Colonic mucosa (tissue), 4 donors: ENCODE measurements at regions of chr17 and their contacts with region 1.

Region 1: GRCh38 chr17:63827002-63827771 is at the starts of genes FTSJ3 and PSMC5:
- DNase-seq: peak; percentile 97
- H3K4me3 ChIP-seq: peak within 1 kb of the TSS; percentile 90
- H3K27ac ChIP-seq: peak within 1 kb of the TSS; percentile 91
- H3K4me1 ChIP-seq: peaks cover 17% of the 10 kb centered on the region
- H3K27me3 ChIP-seq: no peaks in the 10 kb centered on the region
- CTCF ChIP-seq: peak; percentile 16
- total RNA-seq, gene FTSJ3: 25.4 to 44.6 TPM
- total RNA-seq, gene PSMC5: 86.1 to 138 TPM

Region 2: DNA sequence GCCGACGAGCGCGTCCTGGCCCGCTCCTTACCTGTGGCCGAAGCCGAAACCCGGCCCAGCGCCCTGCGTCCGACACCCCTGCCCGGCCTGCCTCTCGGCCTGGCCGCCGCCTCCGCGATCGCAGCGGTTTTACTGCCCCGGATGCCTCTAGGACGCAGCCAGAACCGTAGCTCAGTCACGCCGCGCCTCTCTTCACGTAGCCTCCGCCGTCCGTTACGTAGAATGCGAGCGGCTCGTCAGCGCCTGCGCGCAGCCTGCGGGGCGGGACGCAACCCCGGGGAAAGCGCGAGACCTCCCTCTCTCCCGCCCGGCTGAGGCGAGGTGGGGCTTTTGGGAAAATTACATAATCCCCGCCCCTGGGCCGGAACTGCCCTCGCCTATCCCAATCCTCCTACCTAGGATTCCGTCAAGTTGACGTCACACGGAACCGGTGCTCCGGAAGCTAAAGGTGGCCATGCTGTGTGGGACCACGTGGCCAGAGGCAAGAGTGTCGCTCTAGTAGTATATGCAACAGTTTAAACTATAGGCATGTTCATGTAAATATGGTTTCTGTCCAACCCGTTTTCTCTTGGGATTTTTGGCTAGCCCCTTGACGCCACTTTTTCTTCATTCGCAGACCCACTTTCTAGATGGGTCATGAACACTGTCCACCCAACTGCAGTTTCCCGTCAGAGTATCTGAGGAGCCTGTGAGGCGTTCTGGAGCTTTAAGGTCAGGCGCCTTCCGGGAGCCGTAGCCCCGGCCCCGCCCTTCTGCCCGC is 53.6 kb before region 1 on chr17 and contains the start of gene CCDC47:
- intact Hi-C with region 1: loop called (anchors 10 kb)
- DNase-seq: peak; percentile 99
- H3K4me3 ChIP-seq: peak within 1 kb of the TSS; percentile 92
- H3K27ac ChIP-seq: peak within 1 kb of the TSS; percentile 99
- H3K4me1 ChIP-seq: peaks cover 8% of the 10 kb centered on the region
- H3K27me3 ChIP-seq: no peaks in the 10 kb centered on the region
- CTCF ChIP-seq: no peak
- total RNA-seq, gene CCDC47: 128 to 145 TPM